ENCODE measurements at regions of chr12 and their contacts with region 1.

Region 1: DNA sequence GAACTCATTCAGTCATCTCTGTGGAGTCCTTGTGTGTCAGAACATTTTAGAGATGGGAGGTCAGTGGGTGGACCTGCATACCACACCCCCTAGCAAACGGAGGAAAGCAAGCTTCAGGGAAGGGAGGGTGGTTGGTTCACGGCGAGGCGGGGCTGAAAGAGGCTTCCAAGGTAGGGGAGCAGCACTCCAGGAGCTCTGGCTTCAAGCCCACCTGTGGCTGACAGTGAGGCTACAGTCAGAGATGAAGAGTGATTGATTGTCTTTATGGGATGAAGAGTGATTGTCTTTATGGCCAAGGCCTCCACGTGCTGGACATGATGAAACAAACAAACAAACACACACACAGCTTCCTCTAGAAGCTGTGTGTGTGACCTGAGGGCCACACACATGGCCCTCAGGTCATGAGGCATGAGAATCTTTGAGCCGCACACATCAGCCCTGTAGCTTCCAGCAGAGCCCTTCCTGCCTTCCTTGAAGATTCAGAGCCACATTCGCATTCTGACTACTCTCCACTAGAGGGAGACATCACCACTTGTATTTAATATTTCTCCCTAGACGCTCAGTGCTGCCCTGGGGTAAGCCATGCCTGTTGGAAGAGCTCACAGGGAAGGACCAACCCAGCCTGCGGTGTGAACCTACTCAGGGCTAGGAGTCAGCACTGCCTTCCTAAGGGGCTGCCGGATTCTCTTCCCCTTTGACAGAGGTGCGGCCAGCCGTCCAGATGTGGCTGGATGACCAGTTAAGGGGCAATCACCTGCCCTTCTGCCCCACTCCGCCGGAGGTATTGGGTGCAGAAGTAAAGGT is 54.4 kb upstream of the KCNA1 start:
- DNase-seq: peak; percentile 59
- H3K4me3 Mint-ChIP-seq: no peak overlapping the region
- H3K27ac Mint-ChIP-seq: no peak overlapping the region
- H3K4me1 Mint-ChIP-seq: no peaks in the 10 kb centered on the region
- H3K27me3 Mint-ChIP-seq: peaks cover 88% of the 10 kb centered on the region
- CTCF ChIP-seq: peak; percentile 56

Region 2: GRCh38 chr12:4843907-4844306 is 11.4 kb before region 1 on chr12:
- CTCF ChIA-PET with region 1: interaction called, 10 read pairs
- intact Hi-C with region 1: no loop called
- DNase-seq: no peak
- H3K4me3 Mint-ChIP-seq: no peak overlapping the region
- H3K27ac Mint-ChIP-seq: no peak overlapping the region
- H3K4me1 Mint-ChIP-seq: no peaks in the 10 kb centered on the region
- H3K27me3 Mint-ChIP-seq: peaks cover 13% of the 10 kb centered on the region
- CTCF ChIP-seq: no peak

Region 3: DNA sequence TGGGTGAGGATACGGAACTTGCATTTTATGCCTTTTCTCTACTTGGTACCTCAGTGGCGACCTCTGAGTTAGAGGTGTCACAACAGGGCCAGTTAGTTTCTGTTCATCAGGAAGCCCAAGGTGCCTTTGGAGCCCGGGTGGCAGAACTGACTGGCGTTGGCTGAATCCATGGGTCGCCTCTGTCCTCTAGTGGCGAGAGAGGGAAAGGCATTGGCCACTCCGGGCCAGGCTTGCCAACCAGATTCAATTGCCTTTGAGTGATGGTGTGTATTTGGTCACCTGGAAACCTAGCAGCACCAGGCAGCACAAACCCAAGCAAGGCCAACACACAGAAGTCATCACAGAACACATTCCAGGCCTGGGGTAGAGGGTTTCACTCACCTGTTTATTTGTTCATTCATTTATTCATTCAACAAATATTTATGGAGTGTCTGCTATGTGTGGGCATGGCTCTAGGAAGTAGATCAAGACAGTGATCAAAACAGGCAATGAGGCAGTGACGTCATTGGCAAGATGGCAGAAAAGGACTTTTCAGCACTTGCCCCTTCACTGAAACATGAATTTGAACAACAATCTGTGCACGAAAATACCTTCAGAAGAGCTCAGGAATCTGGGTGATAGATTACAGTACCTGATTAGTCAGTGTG is 147.8 kb after region 1 on chr12:
- CTCF ChIA-PET with region 1: interaction called, 3 read pairs
- intact Hi-C with region 1: loop called (anchors 1 kb)
- DNase-seq: peak; percentile 72
- H3K4me3 Mint-ChIP-seq: no peak overlapping the region
- H3K27ac Mint-ChIP-seq: no peak overlapping the region
- H3K4me1 Mint-ChIP-seq: no peaks in the 10 kb centered on the region
- H3K27me3 Mint-ChIP-seq: peaks cover 16% of the 10 kb centered on the region
- CTCF ChIP-seq: peak; percentile 86

Region 4: DNA sequence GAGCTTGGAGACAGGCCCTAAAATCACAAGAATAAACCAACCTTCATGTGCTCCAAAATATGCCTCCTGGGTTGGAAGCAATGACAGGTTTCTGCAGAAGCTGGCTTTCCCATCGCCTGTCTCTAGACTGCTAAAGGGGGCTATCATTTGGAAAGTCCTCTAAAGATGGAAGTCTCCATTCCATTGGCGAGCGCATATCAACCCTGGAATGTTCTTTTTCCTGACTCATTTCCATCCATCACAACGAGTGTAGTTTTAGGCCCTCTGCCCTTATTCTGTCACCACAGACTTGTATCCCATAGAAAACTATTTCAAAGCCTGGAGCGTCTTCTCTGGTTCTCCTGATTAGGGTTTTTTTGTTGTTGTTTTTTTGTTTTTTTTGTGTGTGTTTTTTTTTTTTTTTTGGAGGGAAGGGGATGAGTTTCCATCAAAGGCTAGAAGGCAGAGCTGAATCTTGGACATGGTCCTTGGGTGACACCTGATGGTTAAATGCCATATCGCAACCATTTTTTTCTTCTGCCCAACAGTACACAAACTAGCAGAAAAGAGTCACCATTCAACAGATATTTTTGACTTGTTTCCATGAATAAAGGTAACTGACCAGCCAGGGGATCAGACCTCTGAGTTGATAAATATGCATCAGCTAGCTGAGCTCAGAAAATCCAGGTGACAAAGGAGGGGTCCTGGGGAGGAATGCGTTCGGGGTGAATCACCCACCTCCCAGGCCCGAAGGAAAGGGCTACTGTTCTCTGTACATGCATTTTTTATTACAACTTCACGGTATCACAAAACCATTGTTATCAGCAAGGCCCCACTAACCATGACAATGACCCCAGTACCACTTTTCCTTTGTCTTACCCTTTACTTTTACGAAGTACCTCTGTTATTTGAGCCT is 228.9 kb after region 1 on chr12:
- CTCF ChIA-PET with region 1: no interaction called
- intact Hi-C with region 1: loop called (anchors 2 kb)
- DNase-seq: peak; percentile 47
- H3K4me3 Mint-ChIP-seq: no peak overlapping the region
- H3K27ac Mint-ChIP-seq: no peak overlapping the region
- H3K4me1 Mint-ChIP-seq: no peaks in the 10 kb centered on the region
- H3K27me3 Mint-ChIP-seq: peaks cover 74% of the 10 kb centered on the region
- CTCF ChIP-seq: peak; percentile 42

Region 5: GRCh38 chr12:5096241-5096935 is 241.1 kb after region 1 on chr12:
- CTCF ChIA-PET with region 1: no interaction called
- intact Hi-C with region 1: no loop called
- DNase-seq: no peak
- H3K4me3 Mint-ChIP-seq: no peak overlapping the region
- H3K27ac Mint-ChIP-seq: no peak overlapping the region
- H3K4me1 Mint-ChIP-seq: no peaks in the 10 kb centered on the region
- H3K27me3 Mint-ChIP-seq: peaks cover 57% of the 10 kb centered on the region
- CTCF ChIP-seq: no peak

Region 6: DNA sequence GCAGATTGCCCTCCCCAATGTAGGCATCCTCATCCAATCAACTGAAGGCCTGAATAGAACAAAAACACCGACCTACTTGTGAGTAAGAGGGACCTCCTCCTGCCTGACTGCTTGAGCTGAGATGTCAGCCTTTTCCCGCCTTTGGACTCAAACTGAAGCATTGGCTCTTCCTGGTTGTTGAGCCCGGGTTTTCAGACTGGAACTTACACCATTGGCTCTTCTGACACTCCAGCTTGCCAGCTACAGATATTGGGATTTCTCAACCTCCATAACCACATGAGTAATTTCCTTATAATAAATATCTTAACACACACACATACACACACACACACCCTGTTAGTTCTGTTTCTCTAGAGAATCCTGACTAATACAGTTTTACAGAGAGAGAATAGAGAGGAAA is 403.2 kb after region 1 on chr12:
- CTCF ChIA-PET with region 1: no interaction called
- intact Hi-C with region 1: no loop called
- DNase-seq: no peak
- H3K4me3 Mint-ChIP-seq: no peak overlapping the region
- H3K27ac Mint-ChIP-seq: no peak overlapping the region
- H3K4me1 Mint-ChIP-seq: no peaks in the 10 kb centered on the region
- H3K27me3 Mint-ChIP-seq: no peaks in the 10 kb centered on the region
- CTCF ChIP-seq: no peak